ENCODE measurements at regions of chr5 and their contacts with region 1.

Region 1: DNA sequence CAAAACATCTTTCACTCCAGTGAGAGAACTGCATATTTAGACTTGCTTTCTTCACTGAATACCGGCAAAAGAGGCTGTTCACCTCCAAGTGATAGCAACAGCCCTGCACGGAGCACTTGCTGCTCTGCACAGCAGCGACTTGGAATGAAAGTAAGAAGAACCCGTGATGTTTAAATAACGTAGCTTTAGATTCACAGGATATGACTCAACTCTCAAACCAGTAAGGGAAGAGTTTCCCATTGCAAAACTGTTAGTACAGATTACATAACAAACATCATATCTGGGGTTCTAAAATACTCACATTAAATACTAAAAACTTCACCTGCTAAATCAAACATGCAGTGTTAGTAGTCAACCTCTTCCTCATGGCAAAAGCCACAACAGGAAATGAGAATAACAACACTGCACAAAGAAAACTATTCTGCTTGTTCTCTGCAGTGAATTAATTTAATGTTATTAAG is 203.4 kb downstream of the MCTP1 start:
- DNase-seq: peak; percentile 93
- H3K4me3 ChIP-seq: peak overlapping the region; percentile 66 to 100 (median 80)
- H3K27ac ChIP-seq: peak overlapping the region; percentile 69
- H3K4me1 ChIP-seq: peaks cover 45% of the 10 kb centered on the region
- H3K27me3 ChIP-seq: no peaks in the 10 kb centered on the region
- CTCF ChIP-seq: no peak
- POLR2A ChIP-seq: peak; percentile 98

Region 2: GRCh38 chr5:95110118-95110517 is 28.6 kb after region 1 on chr5:
- CTCF ChIA-PET with region 1: no interaction called
- POLR2A ChIA-PET with region 1: no interaction called
- dilution Hi-C with region 1: no loop called
- intact Hi-C with region 1: no loop called
- DNase-seq: no peak
- H3K4me3 ChIP-seq: no peak overlapping the region
- H3K27ac ChIP-seq: no peak overlapping the region
- H3K4me1 ChIP-seq: peaks cover 7% of the 10 kb centered on the region
- H3K27me3 ChIP-seq: no peaks in the 10 kb centered on the region
- CTCF ChIP-seq: no peak
- POLR2A ChIP-seq: no peak

Region 3: DNA sequence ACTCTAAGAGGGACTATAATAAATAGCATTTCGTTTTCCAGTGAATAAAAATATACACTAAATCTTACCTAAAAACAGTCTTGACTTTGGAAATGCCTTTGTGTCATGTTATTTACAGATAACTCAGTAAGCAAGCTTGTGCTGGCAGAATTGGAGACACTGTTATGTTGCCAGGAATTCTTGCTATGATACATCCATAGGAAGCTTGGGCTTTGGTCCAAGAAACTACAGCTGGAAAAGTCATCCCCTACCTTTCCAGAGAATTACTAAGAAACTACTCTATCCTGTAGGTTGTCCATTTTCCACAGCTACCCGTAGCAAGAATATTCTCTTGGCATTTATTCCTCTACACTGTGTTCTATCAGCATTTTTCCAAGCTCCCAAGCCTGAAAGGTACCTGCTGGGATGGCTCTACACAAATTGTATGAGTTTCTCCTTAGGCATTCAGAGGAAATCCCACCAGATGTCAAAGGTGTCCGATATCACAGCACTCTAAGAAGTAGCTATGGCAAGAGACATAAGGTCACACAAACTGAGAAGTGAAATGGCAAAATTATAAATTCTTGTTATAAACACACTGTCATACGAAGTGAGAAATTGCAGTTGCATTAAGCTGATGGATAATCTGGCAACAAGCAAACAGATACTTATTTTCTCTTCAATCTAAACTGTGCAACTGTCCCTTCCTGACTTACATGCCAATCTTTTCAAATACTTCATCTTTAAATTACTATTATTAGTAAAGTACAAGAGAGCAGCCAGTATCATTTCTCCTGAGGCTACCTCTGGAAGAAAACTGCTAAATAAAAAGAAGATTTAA is 134.8 kb after region 1 on chr5:
- CTCF ChIA-PET with region 1: no interaction called
- POLR2A ChIA-PET with region 1: no interaction called
- dilution Hi-C with region 1: no loop called
- intact Hi-C with region 1: loop called (anchors 2 kb)
- DNase-seq: peak; percentile 79
- H3K4me3 ChIP-seq: no peak overlapping the region
- H3K27ac ChIP-seq: peak overlapping the region; percentile 91
- H3K4me1 ChIP-seq: peaks cover 27% of the 10 kb centered on the region
- H3K27me3 ChIP-seq: no peaks in the 10 kb centered on the region
- CTCF ChIP-seq: no peak
- POLR2A ChIP-seq: no peak

Region 4: GRCh38 chr5:95238560-95239325 is 157.2 kb after region 1 on chr5:
- CTCF ChIA-PET with region 1: interaction called, 3 read pairs
- POLR2A ChIA-PET with region 1: no interaction called
- dilution Hi-C with region 1: no loop called
- intact Hi-C with region 1: loop called (anchors 1 kb)
- DNase-seq: peak; percentile 68
- H3K4me3 ChIP-seq: no peak overlapping the region
- H3K27ac ChIP-seq: peak overlapping the region; percentile 82
- H3K4me1 ChIP-seq: peaks cover 32% of the 10 kb centered on the region
- H3K27me3 ChIP-seq: no peaks in the 10 kb centered on the region
- CTCF ChIP-seq: peak; percentile 11 to 30
- POLR2A ChIP-seq: no peak

Region 5: DNA sequence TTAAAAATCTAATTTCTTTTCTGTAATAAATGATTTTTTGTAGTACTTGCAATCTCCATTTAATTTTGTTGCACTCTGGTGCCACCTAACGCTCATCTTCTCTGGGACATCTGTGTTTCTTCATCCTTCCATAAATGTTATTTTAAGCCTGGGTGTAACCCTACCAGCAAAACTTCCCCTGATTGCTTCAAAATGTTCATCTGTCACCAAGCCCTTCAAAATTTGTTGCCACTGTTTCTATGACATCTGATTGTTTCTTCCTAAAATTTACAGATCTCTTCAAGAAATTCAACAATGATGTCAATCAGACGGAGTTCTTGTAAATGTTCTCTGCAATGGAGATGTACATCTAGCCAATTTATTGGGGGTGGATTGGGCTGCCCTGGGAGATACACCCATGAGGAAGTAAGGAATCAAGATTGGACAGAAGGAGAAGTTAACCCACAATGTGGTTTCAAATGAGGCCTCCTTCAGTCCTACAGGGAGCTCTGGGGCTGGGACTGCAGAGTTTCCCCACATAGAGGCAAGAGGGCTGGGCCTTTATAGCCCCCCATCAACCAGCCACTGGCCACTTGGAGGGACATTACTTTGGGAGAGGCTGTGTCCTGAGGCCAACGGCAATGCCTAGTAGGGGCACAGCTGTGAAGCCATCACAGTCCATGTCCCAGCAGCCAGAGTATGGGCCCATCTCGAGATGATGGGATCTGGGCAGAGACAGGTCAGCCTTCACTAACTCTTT is 180.1 kb after region 1 on chr5:
- CTCF ChIA-PET with region 1: interaction called, 3 read pairs
- POLR2A ChIA-PET with region 1: no interaction called
- dilution Hi-C with region 1: no loop called
- intact Hi-C with region 1: loop called (anchors 5 kb)
- DNase-seq: peak; percentile 72
- H3K4me3 ChIP-seq: no peak overlapping the region
- H3K27ac ChIP-seq: no peak overlapping the region
- H3K4me1 ChIP-seq: peaks cover 4% of the 10 kb centered on the region
- H3K27me3 ChIP-seq: peaks cover 3 to 8% of the 10 kb centered on the region in 2 experiments
- CTCF ChIP-seq: peak; percentile 39 to 41
- POLR2A ChIP-seq: no peak

Region 6: DNA sequence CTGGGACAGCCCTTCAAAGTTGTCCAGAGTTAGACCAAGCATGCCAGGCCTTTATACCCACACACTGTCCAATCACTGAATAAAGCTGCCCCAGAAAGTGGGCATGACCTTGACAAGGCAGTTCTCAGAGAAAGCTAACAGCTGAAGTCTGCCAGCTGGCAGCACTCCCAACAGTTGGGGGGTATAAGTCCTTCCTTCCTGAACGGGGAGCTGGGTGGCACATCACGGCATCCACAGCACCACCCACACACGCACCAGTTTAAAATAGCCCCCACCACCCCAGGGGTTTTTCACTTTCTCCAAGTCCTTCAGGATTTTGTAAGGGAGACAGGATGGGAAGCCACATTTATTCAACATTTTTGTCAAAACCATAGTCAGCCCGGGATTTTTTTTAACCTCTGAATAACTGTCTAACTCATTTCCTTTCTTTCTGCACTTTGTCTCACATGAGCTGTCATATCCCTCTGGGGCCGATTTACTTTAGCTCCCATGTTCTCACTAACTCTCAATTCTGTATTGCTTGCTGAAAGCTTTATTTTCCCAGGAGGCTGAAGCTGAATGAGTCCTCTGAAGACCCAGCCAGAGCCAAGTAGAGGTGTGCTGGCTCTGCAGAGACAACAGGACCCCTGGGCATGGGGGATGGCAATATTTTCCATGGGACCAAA is 325.0 kb after region 1 on chr5:
- CTCF ChIA-PET with region 1: no interaction called
- POLR2A ChIA-PET with region 1: no interaction called
- dilution Hi-C with region 1: no loop called
- intact Hi-C with region 1: no loop called
- DNase-seq: peak; percentile 30
- H3K4me3 ChIP-seq: no peak overlapping the region
- H3K27ac ChIP-seq: no peak overlapping the region
- H3K4me1 ChIP-seq: peaks cover 10% of the 10 kb centered on the region
- H3K27me3 ChIP-seq: no peaks in the 10 kb centered on the region
- CTCF ChIP-seq: no peak
- POLR2A ChIP-seq: no peak

Measured in endothelial cell of umbilical vein (primary cell).